H1 (cell line): ENCODE measurements at regions of chr20 and their contacts with region 1.

Region 1: DNA sequence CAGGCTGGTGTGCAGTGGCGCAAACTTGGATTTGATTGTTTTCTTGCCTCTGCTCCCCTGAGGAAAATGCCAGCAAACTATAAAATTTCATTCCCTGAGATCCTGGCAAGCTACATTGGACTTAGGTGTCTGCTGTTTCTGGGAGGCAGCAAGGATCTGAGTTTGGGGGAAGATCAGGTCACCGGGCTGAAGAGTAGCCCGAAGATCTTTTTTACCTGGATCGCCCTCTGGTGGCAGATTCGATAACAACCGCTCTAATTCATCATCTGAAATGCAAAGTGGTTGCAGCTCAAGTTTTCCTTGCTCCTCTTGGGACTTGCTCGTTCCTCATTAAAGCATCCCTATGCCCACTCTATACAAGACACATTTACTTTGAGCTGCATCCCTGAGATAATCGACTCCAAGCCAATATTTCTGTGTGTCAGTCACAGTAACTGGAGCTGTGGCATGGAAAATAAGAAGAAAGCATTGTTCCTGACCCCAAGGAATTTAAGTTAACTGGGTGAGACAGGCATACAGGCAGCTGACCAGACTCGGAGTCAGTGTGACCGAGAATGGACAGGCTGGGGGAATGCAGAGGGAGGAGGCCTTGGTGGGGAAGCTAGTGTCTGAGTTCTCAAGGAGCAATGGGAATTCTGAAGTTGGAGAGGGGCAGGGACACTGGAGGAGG is 131.8 kb upstream of the PROKR2 start:
- DNase-seq: peak; percentile 36 to 90
- H3K4me3 ChIP-seq: no peak overlapping the region; a peak in 1 of 8 replicates
- H3K27ac ChIP-seq: no peak overlapping the region
- H3K4me1 ChIP-seq: no peaks in the 10 kb centered on the region
- H3K27me3 ChIP-seq: no peaks in the 10 kb centered on the region
- CTCF ChIP-seq: peak; percentile 30 to 78 (median 71)
- EP300 ChIP-seq: no peak
- POLR2A ChIP-seq: no peak
- RAD21 ChIP-seq: peak; percentile 73 to 77

Region 2: GRCh38 chr20:5309971-5310370 is 138.6 kb before region 1 on chr20:
- CTCF ChIA-PET with region 1: no interaction called
- POLR2A ChIA-PET with region 1: no interaction called
- DNase-seq: no peak
- H3K4me3 ChIP-seq: no peak overlapping the region
- H3K27ac ChIP-seq: no peak overlapping the region
- H3K4me1 ChIP-seq: no peaks in the 10 kb centered on the region; a peak in 1 of 7 replicates
- H3K27me3 ChIP-seq: peaks cover 4 to 13% (median 10%) of the 10 kb centered on the region in 4 experiments
- CTCF ChIP-seq: no peak
- EP300 ChIP-seq: no peak
- POLR2A ChIP-seq: no peak
- RAD21 ChIP-seq: no peak

Region 3: GRCh38 chr20:5402903-5403531 is 45.6 kb before region 1 on chr20:
- CTCF ChIA-PET with region 1: interaction called, 53 read pairs
- POLR2A ChIA-PET with region 1: no interaction called
- DNase-seq: peak in 1 of 2 experiments; percentile 74
- H3K4me3 ChIP-seq: no peak overlapping the region
- H3K27ac ChIP-seq: no peak overlapping the region
- H3K4me1 ChIP-seq: no peaks in the 10 kb centered on the region
- H3K27me3 ChIP-seq: no peaks in the 10 kb centered on the region
- CTCF ChIP-seq: peak; percentile 74 to 78 (median 75)
- EP300 ChIP-seq: no peak
- POLR2A ChIP-seq: no peak
- RAD21 ChIP-seq: peak; percentile 62 to 73

Region 4: DNA sequence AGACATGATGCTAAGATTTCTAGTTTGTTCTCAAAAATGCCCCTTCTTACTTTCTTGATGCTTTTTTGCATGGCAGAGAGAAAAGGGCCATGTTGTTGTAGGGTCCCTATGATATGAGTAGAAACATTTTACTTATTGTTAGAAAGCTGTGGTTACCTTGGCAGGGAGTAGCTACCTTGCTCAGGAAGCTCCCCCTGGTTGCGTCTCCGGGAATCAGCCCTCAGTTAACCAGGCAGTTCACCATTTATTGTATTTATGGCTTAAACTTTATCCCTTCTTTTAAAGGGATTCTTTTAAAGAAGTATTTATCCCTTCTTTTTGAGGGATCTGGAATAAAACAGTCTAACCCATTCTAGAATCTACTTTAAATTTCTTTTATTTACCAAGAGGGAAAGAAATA is 17.9 kb before region 1 on chr20:
- CTCF ChIA-PET with region 1: interaction called, 50 read pairs
- POLR2A ChIA-PET with region 1: no interaction called
- DNase-seq: no peak
- H3K4me3 ChIP-seq: no peak overlapping the region
- H3K27ac ChIP-seq: no peak overlapping the region
- H3K4me1 ChIP-seq: no peaks in the 10 kb centered on the region
- H3K27me3 ChIP-seq: peaks cover 0 to 2% (median 0%) of the 10 kb centered on the region in 4 experiments; a peak in 1 of 7 replicates
- CTCF ChIP-seq: peak; percentile 39 to 49 (median 40)
- EP300 ChIP-seq: no peak
- POLR2A ChIP-seq: no peak
- RAD21 ChIP-seq: peak; percentile 34 to 40; a peak in 3 of 4 replicates

Region 5: DNA sequence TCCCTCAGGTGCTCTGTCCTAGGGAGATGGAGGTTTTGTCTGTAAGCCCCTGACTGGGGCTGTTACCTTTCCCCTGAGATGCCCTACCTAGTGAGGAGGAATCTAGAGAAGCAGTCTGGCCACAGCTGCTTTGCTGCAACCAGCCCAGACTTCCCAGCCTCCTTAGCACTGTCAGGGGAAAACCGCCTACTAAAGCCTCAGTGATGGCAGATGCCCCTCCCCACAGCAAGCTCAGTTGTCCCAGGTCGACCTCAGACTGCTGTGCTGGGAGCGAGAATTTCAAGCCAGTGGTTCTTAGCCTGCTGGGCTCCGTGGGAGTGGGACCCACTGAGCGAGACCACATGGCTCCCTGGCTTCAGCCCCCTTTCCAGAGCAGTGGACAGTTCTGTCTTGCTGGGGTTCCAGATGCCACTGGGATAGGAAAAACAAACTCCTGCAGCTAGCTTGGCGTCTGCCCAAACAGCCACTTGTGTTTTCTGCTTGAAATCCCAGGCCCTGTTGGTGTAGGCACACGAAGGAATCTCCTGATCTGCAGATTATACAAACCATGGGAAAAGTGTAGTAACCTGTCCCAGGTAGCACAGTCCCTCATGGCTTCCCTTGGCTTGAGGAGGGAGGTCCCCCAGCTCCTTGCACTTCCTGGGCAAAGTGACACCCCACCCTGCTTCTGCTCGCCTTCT is 14.6 kb after region 1 on chr20:
- CTCF ChIA-PET with region 1: interaction called, 19 read pairs
- POLR2A ChIA-PET with region 1: no interaction called
- DNase-seq: no peak
- H3K4me3 ChIP-seq: no peak overlapping the region
- H3K27ac ChIP-seq: no peak overlapping the region
- H3K4me1 ChIP-seq: no peaks in the 10 kb centered on the region
- H3K27me3 ChIP-seq: no peaks in the 10 kb centered on the region
- CTCF ChIP-seq: no peak
- EP300 ChIP-seq: no peak
- POLR2A ChIP-seq: no peak
- RAD21 ChIP-seq: no peak

Region 6: GRCh38 chr20:5469111-5469510 is 20.5 kb after region 1 on chr20:
- CTCF ChIA-PET with region 1: interaction called, 19 read pairs
- POLR2A ChIA-PET with region 1: no interaction called
- DNase-seq: no peak
- H3K4me3 ChIP-seq: no peak overlapping the region
- H3K27ac ChIP-seq: no peak overlapping the region
- H3K4me1 ChIP-seq: no peaks in the 10 kb centered on the region; a peak in 1 of 7 replicates
- H3K27me3 ChIP-seq: no peaks in the 10 kb centered on the region
- CTCF ChIP-seq: no peak
- EP300 ChIP-seq: no peak
- POLR2A ChIP-seq: no peak
- RAD21 ChIP-seq: no peak

Region 7: DNA sequence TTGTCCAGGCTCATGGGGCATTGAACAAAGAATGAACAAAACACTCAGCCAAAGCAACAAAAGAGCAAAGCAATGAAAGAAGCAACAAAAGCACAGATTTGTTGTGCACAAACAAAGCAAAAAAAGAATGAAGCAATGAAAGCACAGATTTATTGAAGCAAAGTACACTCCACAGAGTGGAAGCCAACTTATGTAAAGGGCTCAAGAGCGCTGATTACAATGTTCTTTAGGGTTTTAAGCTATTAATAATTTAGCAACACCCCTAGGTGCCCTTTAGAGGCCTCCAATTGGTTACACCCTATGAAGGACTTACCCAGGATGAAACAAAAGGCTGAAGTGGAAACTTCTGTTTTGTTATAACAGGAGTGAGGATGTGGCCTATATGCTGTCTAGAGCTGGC is 47.4 kb after region 1 on chr20:
- CTCF ChIA-PET with region 1: no interaction called
- POLR2A ChIA-PET with region 1: no interaction called
- DNase-seq: no peak
- H3K4me3 ChIP-seq: no peak overlapping the region
- H3K27ac ChIP-seq: no peak overlapping the region
- H3K4me1 ChIP-seq: no peaks in the 10 kb centered on the region
- H3K27me3 ChIP-seq: no peaks in the 10 kb centered on the region
- CTCF ChIP-seq: no peak
- EP300 ChIP-seq: no peak
- POLR2A ChIP-seq: no peak
- RAD21 ChIP-seq: no peak

Region 8: DNA sequence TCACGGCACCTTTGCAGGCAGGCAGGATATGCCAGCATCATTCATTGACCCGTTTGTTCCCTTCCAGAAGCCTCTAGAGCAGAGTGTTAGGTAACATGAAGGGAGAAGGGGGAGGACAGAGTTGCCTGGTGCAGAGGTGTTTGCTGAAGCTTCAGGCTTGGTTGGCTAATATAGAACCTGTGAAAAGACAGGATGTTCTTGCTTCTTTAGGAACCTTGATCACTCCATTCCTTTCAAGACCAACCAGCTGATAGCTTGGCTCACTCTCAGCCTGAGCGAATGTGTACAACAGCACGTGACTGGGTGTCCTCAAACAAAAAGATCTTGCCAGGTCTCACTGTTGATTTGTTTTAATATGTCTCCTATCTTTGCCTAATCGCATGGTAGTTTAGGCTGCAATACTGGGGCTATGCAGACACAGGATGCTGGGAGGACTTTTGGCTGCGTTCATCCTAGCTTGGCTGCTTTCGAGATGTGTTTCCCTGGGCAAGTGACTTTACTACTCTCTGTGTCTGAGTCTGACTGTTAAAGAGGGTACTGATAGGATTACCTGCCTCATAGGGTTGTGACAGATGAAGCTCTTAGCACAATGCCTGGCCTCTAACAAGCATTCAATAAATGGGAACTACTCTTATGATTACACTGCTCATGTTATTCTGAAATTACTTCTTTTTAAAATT is 317.6 kb after region 1 on chr20:
- CTCF ChIA-PET with region 1: no interaction called
- POLR2A ChIA-PET with region 1: no interaction called
- DNase-seq: no peak
- H3K4me3 ChIP-seq: no peak overlapping the region
- H3K27ac ChIP-seq: no peak overlapping the region
- H3K4me1 ChIP-seq: no peaks in the 10 kb centered on the region
- H3K27me3 ChIP-seq: no peaks in the 10 kb centered on the region
- CTCF ChIP-seq: no peak
- EP300 ChIP-seq: no peak
- POLR2A ChIP-seq: no peak
- RAD21 ChIP-seq: no peak